ENCODE measurements at regions of chr7 and their contacts with region 1.

Region 1: DNA sequence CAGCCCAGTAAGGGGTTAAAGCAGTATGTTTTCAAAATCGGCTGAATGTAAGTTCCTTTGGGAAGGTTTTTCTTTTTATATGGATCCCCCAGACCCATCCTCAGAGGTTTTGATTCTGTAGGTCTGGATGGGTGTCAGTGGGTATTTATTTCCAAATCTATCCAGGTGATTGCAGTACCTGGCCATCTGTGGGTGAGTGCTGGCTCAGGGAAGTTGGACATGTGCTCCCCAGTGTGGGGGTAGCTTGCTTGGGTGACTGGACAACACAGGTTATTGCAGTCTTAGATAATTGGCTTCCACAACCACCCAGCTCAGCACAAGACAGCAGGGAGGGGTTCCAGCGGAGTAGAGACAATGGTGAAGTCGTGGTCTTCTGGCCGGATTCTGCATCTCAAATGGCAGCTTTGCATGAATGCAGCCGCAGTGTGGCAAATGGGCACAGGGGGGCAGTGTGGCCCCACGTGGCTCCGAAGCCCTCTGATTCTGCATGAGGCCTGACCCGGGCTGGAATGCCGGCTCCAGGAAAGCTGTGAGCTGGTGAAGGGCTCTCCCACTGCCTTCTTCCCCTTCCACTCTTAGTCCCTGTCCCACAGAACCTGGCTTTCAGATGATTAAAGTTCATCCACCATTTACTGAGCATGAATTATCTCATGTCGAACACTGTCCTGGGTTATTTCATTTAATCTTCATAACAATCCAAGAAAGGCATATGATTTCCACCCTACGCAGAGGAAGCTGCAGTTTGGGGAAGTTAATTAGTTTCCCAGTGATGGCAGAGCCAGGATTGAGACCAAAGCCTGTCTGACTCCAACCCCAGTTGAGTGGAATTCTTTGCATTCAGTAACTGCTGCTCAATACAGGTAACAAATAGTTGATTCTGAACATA is 64.5 kb upstream of the SYPL1 start:
- DNase-seq: peak; percentile 91
- H3K4me3 Mint-ChIP-seq: no peak overlapping the region
- H3K27ac Mint-ChIP-seq: no peak overlapping the region
- H3K4me1 Mint-ChIP-seq: peaks cover 4% of the 10 kb centered on the region
- H3K27me3 Mint-ChIP-seq: peaks cover 22% of the 10 kb centered on the region

Region 2: GRCh38 chr7:106100863-106101629 is 75.6 kb before region 1 on chr7:
- intact Hi-C with region 1: no loop called
- DNase-seq: no peak
- H3K4me3 Mint-ChIP-seq: no peak overlapping the region
- H3K27ac Mint-ChIP-seq: no peak overlapping the region
- H3K4me1 Mint-ChIP-seq: peaks cover 36% of the 10 kb centered on the region
- H3K27me3 Mint-ChIP-seq: no peaks in the 10 kb centered on the region

Region 3: DNA sequence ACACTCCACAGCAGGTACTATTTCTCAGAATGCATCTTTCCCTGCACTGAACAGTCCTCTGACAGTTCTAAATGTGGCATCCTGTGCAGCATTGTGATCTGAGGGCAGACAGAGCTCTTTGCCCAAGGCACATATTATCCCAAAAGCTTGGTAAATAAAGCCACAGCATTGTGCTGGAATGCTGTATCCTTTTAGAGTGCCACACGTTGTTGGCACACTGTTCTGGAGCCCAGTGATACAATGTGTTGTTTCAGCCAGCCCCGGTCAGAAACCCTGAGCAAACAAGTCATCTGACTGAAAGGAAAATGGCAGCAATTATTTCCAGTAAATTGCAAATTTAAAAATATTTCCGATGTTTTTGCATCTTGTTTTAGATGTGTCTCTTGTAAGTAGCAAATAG is 62.7 kb after region 1 on chr7:
- intact Hi-C with region 1: no loop called
- DNase-seq: peak; percentile 37
- H3K4me3 Mint-ChIP-seq: no peak overlapping the region
- H3K27ac Mint-ChIP-seq: no peak overlapping the region
- H3K4me1 Mint-ChIP-seq: no peaks in the 10 kb centered on the region
- H3K27me3 Mint-ChIP-seq: peaks cover 3% of the 10 kb centered on the region

Region 4: GRCh38 chr7:106260136-106260561 is 83.5 kb after region 1 on chr7:
- intact Hi-C with region 1: loop called (anchors 5 kb)
- DNase-seq: peak; percentile 73
- H3K4me3 Mint-ChIP-seq: peak overlapping the region; percentile 62
- H3K27ac Mint-ChIP-seq: peak overlapping the region; percentile 78
- H3K4me1 Mint-ChIP-seq: peaks cover 37% of the 10 kb centered on the region
- H3K27me3 Mint-ChIP-seq: no peaks in the 10 kb centered on the region

Region 5: GRCh38 chr7:106542550-106543220 is 366.0 kb after region 1 on chr7:
- intact Hi-C with region 1: loop called (anchors 10 kb)
- DNase-seq: peak; percentile 75
- H3K4me3 Mint-ChIP-seq: no peak overlapping the region
- H3K27ac Mint-ChIP-seq: peak overlapping the region; percentile 4
- H3K4me1 Mint-ChIP-seq: peaks cover 8% of the 10 kb centered on the region
- H3K27me3 Mint-ChIP-seq: no peaks in the 10 kb centered on the region

Measured in activated CD4-positive, alpha-beta T cell treated with anti-CD3 and anti-CD28 coated beads, Interleukin-2, amount 10 ng/mL, durations not matched to agents 24 days and 14 days (primary cell).